ENCODE measurements at regions of chr3 and their contacts with region 1.

Region 1: GRCh38 chr3:10248184-10249080 is at the start of gene TATDN2:
- DNase-seq: peak; percentile 96
- ATAC-seq: peak; percentile 96
- H3K4me3 ChIP-seq: peak within 1 kb of the TSS; percentile 69 to 86 (median 82)
- H3K4me3 Mint-ChIP-seq: peak within 1 kb of the TSS; percentile 97
- H3K27ac ChIP-seq: peak within 1 kb of the TSS; percentile 70 to 78
- H3K27ac Mint-ChIP-seq: peak within 1 kb of the TSS; percentile 92
- H3K4me1 ChIP-seq: peaks cover 25 to 28% of the 10 kb centered on the region in 2 donors
- H3K4me1 Mint-ChIP-seq: peaks cover 39% of the 10 kb centered on the region
- H3K27me3 ChIP-seq: no peaks in the 10 kb centered on the region
- H3K27me3 Mint-ChIP-seq: no peaks in the 10 kb centered on the region
- CTCF ChIP-seq: no peak
- total RNA-seq, gene TATDN2: 62.7 and 62.9 TPM in 2 replicates

Region 2: DNA sequence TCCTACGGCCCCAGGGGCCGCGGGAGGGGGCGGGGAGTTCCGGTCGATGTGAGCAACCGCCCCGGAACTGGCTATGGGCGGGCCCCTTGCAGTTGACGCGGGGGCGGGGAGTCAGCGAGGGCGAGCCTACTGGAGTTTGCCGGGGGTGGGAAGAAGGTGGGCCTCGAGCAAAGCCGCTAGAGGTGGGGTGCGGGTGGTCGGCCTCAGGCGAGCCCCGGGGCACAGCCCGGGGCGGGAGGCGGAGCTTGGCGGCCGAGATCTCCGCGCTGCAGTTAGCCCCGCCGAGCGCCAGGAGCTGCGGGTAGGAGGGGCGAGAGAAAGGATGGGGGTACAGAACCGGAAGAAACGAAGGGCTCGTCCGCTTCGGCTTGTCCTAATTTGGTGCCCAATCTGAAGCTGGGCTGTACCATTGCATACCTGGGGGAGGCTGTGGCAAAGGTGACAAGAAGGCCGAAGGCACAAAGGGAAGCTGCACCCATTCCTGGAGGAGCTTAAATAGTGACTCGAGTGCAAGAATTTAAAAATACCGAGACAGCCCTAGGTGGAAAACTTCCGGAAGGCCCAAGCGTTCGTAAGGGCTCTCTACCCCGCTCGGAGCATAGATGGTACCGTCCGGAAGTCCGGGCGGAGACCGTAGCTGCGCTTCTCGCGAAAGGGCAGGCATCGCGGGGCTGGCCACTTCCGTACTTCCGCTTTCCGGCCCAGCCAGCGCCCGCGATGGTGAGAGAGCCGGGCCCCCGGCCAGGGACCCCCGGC is 455.8 kb before region 1 on chr3 and contains the starts of genes ARPC4 and TADA3:
- CTCF ChIA-PET with region 1: no interaction called
- POLR2A ChIA-PET with region 1: no interaction called
- intact Hi-C with region 1: loop called (anchors 1 kb)
- DNase-seq: peak; percentile 99
- ATAC-seq: peak; percentile 77
- H3K4me3 ChIP-seq: peak within 1 kb of the TSS; percentile 78 to 99 (median 94)
- H3K4me3 Mint-ChIP-seq: peak within 1 kb of the TSS; percentile 99
- H3K27ac ChIP-seq: peak within 1 kb of the TSS; percentile 93 to 99
- H3K27ac Mint-ChIP-seq: peak within 1 kb of the TSS; percentile 100
- H3K4me1 ChIP-seq: peaks cover 51 to 63% of the 10 kb centered on the region in 2 donors
- H3K4me1 Mint-ChIP-seq: peaks cover 57% of the 10 kb centered on the region
- H3K27me3 ChIP-seq: no peaks in the 10 kb centered on the region
- H3K27me3 Mint-ChIP-seq: no peaks in the 10 kb centered on the region
- CTCF ChIP-seq: no peak
- total RNA-seq, gene ARPC4: 174 and 179 TPM in 2 replicates
- total RNA-seq, gene TADA3: 43.4 and 45.6 TPM in 2 replicates

Region 3: GRCh38 chr3:9932843-9933560 is 315.4 kb before region 1 on chr3:
- CTCF ChIA-PET with region 1: interaction called, 3 read pairs
- POLR2A ChIA-PET with region 1: interaction called, 6 read pairs
- intact Hi-C with region 1: loop called (anchors 5 kb)
- DNase-seq: peak; percentile 93
- ATAC-seq: peak; percentile 68
- H3K4me3 ChIP-seq: peak overlapping the region in 4 of 5 experiments; percentile 54 to 95 (median 71)
- H3K4me3 Mint-ChIP-seq: peak overlapping the region; percentile 94
- H3K27ac ChIP-seq: peak overlapping the region; percentile 82 to 94
- H3K27ac Mint-ChIP-seq: peak overlapping the region; percentile 98
- H3K4me1 ChIP-seq: peaks cover 22 to 26% of the 10 kb centered on the region in 2 donors
- H3K4me1 Mint-ChIP-seq: peaks cover 39% of the 10 kb centered on the region
- H3K27me3 ChIP-seq: no peaks in the 10 kb centered on the region
- H3K27me3 Mint-ChIP-seq: no peaks in the 10 kb centered on the region
- CTCF ChIP-seq: peak; percentile 85

Region 4: GRCh38 chr3:10010486-10011465 is 237.7 kb before region 1 on chr3:
- CTCF ChIA-PET with region 1: no interaction called
- POLR2A ChIA-PET with region 1: no interaction called
- intact Hi-C with region 1: loop called (anchors 1 kb)
- DNase-seq: peak; percentile 86
- ATAC-seq: peak; percentile 86
- H3K4me3 ChIP-seq: peak overlapping the region in 4 of 5 experiments; percentile 46 to 64 (median 57)
- H3K4me3 Mint-ChIP-seq: peak overlapping the region; percentile 85
- H3K27ac ChIP-seq: no peak overlapping the region
- H3K27ac Mint-ChIP-seq: no peak overlapping the region
- H3K4me1 ChIP-seq: peaks cover 14 to 29% of the 10 kb centered on the region in 2 donors
- H3K4me1 Mint-ChIP-seq: peaks cover 20% of the 10 kb centered on the region
- H3K27me3 ChIP-seq: no peaks in the 10 kb centered on the region
- H3K27me3 Mint-ChIP-seq: no peaks in the 10 kb centered on the region
- CTCF ChIP-seq: no peak

Region 5: DNA sequence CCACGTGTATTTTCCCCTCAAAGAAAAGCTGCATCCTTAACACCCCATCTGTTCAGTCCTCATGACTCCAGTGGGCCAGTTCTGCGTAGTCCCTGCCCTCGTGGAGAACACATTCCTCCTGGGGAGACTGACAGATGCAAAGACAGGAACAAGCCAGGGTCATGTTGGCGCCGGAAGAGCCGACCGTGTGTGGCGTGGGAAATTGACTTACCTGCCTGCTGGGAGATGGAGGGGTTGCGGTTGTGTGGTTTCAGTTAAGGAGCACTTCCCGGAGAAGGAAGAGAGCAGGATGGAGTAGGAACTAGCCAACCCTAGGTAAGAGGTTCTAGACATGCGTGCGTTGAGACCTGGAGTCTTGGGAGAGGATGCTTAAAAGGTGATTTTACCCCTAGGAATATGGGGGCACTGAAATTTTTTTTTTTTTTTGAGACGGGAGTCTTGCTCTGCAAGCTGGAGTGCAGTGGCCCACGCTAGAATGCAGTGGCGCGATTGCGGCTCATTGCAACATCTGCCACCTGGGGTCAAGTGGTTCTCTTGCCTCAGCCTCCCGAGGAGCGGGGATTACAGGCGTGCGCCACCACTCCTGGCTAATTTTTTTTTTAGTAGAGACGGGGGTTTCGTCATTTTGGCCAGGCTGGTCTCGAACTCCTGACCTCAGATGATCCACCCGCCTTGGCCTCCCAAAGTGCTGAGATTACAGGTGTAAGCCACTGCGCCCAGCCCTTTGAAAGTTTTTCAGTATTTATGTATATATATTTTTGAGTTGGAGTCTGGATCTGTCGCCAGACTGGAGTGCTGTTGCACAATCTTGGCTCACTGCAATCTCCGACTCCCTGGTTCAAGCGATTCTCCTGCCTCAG is 105.5 kb before region 1 on chr3:
- CTCF ChIA-PET with region 1: no interaction called
- POLR2A ChIA-PET with region 1: interaction called, 9 read pairs
- intact Hi-C with region 1: loop called (anchors 1 kb)
- DNase-seq: peak; percentile 31
- ATAC-seq: no peak
- H3K4me3 ChIP-seq: peak overlapping the region; percentile 8 to 91 (median 77)
- H3K4me3 Mint-ChIP-seq: peak overlapping the region; percentile 95
- H3K27ac ChIP-seq: peak overlapping the region; percentile 88 to 96
- H3K27ac Mint-ChIP-seq: peak overlapping the region; percentile 97
- H3K4me1 ChIP-seq: peaks cover 28 to 50% of the 10 kb centered on the region in 2 donors
- H3K4me1 Mint-ChIP-seq: peaks cover 32% of the 10 kb centered on the region
- H3K27me3 ChIP-seq: no peaks in the 10 kb centered on the region
- H3K27me3 Mint-ChIP-seq: no peaks in the 10 kb centered on the region
- CTCF ChIP-seq: no peak

Region 6: GRCh38 chr3:10224784-10225665 is 23.4 kb before region 1 on chr3:
- CTCF ChIA-PET with region 1: interaction called, 5 read pairs
- POLR2A ChIA-PET with region 1: interaction called, 6 read pairs
- intact Hi-C with region 1: loop called (anchors 2 kb)
- DNase-seq: peak; percentile 79
- ATAC-seq: peak; percentile 46
- H3K4me3 ChIP-seq: no peak overlapping the region
- H3K4me3 Mint-ChIP-seq: peak overlapping the region; percentile 67
- H3K27ac ChIP-seq: peak overlapping the region in 1 of 2 donors; percentile 1
- H3K27ac Mint-ChIP-seq: peak overlapping the region; percentile 83
- H3K4me1 ChIP-seq: peaks cover 40 to 66% of the 10 kb centered on the region in 2 donors
- H3K4me1 Mint-ChIP-seq: peaks cover 63% of the 10 kb centered on the region
- H3K27me3 ChIP-seq: no peaks in the 10 kb centered on the region
- H3K27me3 Mint-ChIP-seq: no peaks in the 10 kb centered on the region
- CTCF ChIP-seq: peak; percentile 83

Measured in B cell (primary cell).